MCF 10A (cell line): ENCODE measurements at regions of chr13 and their contacts with region 1.

Region 1: DNA sequence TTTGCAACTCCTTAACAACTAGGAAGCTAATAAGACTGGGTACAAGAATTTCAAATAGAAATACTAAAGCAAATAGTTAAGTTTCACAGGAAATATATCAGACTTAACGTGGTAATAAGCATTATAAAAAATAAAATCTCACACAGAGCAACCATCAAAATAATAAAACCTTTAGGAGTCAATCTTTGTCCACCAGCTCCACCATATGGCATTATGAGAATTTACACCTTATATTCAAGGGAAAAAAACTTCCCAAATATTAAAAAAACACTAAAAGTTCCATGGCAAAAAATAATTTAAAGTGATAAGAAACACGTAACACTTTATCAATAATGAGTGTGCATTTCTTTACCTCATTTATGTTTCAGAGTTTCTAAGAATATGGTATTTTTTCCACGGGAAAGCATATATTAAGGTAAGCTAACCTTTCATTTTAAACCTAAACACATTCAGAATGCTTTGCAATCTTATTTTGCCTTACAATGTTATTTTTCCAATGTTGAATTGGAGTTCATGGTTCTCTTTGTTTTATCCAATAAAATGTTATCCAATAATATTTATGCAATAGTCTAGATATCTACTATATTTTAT is 423.2 kb upstream of the SGCG start:
- DNase-seq: no peak
- H3K4me3 Mint-ChIP-seq: no peak overlapping the region
- H3K27ac Mint-ChIP-seq: no peak overlapping the region
- H3K4me1 Mint-ChIP-seq: no peaks in the 10 kb centered on the region
- H3K27me3 Mint-ChIP-seq: no peaks in the 10 kb centered on the region
- CTCF ChIP-seq: peak; percentile 69

Region 2: GRCh38 chr13:21625366-21625765 is 1132.3 kb before region 1 on chr13:
- CTCF ChIA-PET with region 1: interaction called, 6 read pairs
- POLR2A ChIA-PET with region 1: no interaction called
- intact Hi-C with region 1: loop called (anchors 1 kb)
- DNase-seq: peak; percentile 65
- H3K4me3 Mint-ChIP-seq: no peak overlapping the region
- H3K27ac Mint-ChIP-seq: no peak overlapping the region
- H3K4me1 Mint-ChIP-seq: peaks cover 7% of the 10 kb centered on the region
- H3K27me3 Mint-ChIP-seq: no peaks in the 10 kb centered on the region
- CTCF ChIP-seq: no peak

Region 3: GRCh38 chr13:21849323-21849722 is 908.3 kb before region 1 on chr13:
- CTCF ChIA-PET with region 1: no interaction called
- POLR2A ChIA-PET with region 1: no interaction called
- intact Hi-C with region 1: loop called (anchors 10 kb)
- DNase-seq: no peak
- H3K4me3 Mint-ChIP-seq: no peak overlapping the region
- H3K27ac Mint-ChIP-seq: no peak overlapping the region
- H3K4me1 Mint-ChIP-seq: no peaks in the 10 kb centered on the region
- H3K27me3 Mint-ChIP-seq: no peaks in the 10 kb centered on the region
- CTCF ChIP-seq: peak; percentile 56

Region 4: DNA sequence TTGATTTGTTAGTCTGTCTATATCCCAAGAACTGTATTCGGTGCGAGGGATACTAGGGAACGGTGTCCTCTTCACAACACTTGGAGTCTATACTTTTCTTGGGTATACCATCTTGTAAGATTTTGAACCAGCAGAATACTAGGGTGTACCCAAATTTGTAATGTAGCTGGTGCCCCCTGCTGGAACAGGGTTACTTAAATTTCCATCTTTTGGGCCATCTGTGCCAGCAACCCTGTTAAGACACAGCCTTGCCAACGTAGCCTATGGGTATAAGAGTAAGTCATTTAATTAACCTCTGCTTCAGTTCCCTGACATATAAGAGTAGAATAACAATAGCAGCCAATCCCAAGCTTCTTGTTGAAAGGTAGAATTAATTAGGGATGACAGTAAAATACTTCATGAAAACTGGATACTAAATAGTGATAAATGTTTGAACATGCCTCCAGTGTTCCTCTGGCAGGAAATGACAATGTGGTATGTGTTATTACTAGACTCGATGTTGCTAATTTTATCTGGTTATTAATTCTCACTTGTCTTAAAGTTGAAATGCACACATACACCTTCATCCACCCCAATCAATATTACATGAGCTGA is 479.2 kb before region 1 on chr13:
- CTCF ChIA-PET with region 1: interaction called, 7 read pairs
- POLR2A ChIA-PET with region 1: no interaction called
- intact Hi-C with region 1: loop called (anchors 5 kb)
- DNase-seq: no peak
- H3K4me3 Mint-ChIP-seq: no peak overlapping the region
- H3K27ac Mint-ChIP-seq: peak overlapping the region; percentile 10
- H3K4me1 Mint-ChIP-seq: peaks cover 6% of the 10 kb centered on the region
- H3K27me3 Mint-ChIP-seq: no peaks in the 10 kb centered on the region
- CTCF ChIP-seq: peak; percentile 62

Region 5: DNA sequence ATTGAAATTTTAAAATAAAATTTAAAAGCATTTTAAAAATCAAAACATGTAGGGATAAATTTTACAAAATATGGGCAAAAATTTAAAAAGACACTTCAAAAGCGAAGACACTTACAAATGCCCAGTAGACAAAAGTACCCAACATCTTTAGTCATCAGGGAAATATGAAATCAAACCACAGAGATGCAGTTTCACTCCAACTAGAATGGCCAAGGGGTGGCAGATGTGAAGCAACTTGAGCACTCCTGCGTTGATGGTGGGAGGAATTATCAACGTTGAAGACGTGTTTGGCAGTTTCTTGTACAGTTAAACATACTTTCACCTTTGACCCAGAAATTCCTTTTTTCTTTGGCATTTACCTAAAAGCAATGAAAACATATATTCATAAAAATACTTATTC is 94.9 kb before region 1 on chr13:
- CTCF ChIA-PET with region 1: no interaction called
- POLR2A ChIA-PET with region 1: no interaction called
- intact Hi-C with region 1: loop called (anchors 2 kb)
- DNase-seq: no peak
- H3K4me3 Mint-ChIP-seq: no peak overlapping the region
- H3K27ac Mint-ChIP-seq: no peak overlapping the region
- H3K4me1 Mint-ChIP-seq: peaks cover 5% of the 10 kb centered on the region
- H3K27me3 Mint-ChIP-seq: no peaks in the 10 kb centered on the region
- CTCF ChIP-seq: no peak